Activated CD4-positive, alpha-beta T cell treated with anti-CD3 and anti-CD28 coated beads for 36 hours (primary cell): ENCODE measurements at regions of chr6 and their contacts with region 1.

Region 1: GRCh38 chr6:148885136-148885870 is 138.5 kb downstream of the UST start:
- DNase-seq: no peak
- ATAC-seq: no peak
- H3K4me3 Mint-ChIP-seq: no peak overlapping the region
- H3K27ac Mint-ChIP-seq: no peak overlapping the region
- H3K4me1 Mint-ChIP-seq: peaks cover 6% of the 10 kb centered on the region
- H3K27me3 Mint-ChIP-seq: no peaks in the 10 kb centered on the region

Region 2: GRCh38 chr6:147774856-147775255 is 1110.4 kb before region 1 on chr6:
- CTCF ChIA-PET with region 1: no interaction called
- POLR2A ChIA-PET with region 1: no interaction called
- intact Hi-C with region 1: loop called in 1 of 2 experiments (anchors 5 kb)
- DNase-seq: no peak
- ATAC-seq: no peak
- H3K4me3 Mint-ChIP-seq: no peak overlapping the region
- H3K27ac Mint-ChIP-seq: no peak overlapping the region
- H3K4me1 Mint-ChIP-seq: no peaks in the 10 kb centered on the region
- H3K27me3 Mint-ChIP-seq: no peaks in the 10 kb centered on the region